Activated CD4-positive, alpha-beta T cell treated with anti-CD3 and anti-CD28 coated beads, Interleukin-2, amount 10 ng/mL, durations not matched to agents 24 days and 14 days (primary cell): ENCODE measurements at regions of chr10 and their contacts with region 1.

Region 1: GRCh38 chr10:8331883-8332729 is 277.6 kb downstream of the GATA3 start:
- DNase-seq: peak; percentile 95
- H3K4me3 Mint-ChIP-seq: peak overlapping the region; percentile 76
- H3K27ac Mint-ChIP-seq: peak overlapping the region; percentile 81
- H3K4me1 Mint-ChIP-seq: peaks cover 42% of the 10 kb centered on the region
- H3K27me3 Mint-ChIP-seq: no peaks in the 10 kb centered on the region

Region 2: DNA sequence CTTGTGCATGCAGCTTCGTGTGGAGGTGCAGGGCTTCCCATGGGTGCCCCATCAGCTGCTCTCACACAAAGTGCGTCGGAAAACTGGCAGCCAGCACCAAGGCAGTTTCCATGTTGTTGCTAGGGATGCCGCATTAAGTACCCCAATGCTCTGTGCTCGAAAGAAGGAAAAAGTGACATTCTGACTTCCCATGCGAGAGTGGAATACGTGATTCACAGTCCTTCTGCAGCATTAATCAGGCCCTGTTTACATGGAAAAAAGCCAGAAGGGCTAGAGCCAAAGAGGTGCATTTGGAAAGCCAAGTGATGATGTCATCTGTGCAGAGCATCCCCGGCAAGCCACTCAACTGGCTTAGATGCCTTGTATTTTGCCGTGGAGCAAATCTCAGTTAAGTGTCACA is 19.3 kb before region 1 on chr10:
- intact Hi-C with region 1: loop called (anchors 1 kb)
- DNase-seq: no peak
- H3K4me3 Mint-ChIP-seq: no peak overlapping the region
- H3K27ac Mint-ChIP-seq: peak overlapping the region; percentile 64
- H3K4me1 Mint-ChIP-seq: peaks cover 34% of the 10 kb centered on the region
- H3K27me3 Mint-ChIP-seq: no peaks in the 10 kb centered on the region

Region 3: DNA sequence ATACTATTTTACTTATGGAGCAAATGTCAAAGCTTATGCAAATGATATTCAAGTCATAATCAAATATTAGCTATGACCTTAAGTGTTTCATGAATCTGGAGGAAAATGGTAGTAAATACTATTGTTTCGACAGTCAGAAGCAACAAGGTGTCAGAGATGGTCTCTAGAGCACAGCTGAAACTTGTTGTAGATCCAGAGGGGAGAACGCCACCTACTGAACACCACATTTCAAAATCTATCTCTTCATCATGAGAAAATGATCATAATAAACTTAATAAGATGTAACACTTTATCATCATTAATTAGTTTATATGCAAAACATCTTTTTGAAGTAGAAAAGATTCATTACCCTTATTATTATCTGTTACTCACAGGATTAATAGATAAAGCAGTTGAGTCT is 141.1 kb after region 1 on chr10:
- intact Hi-C with region 1: no loop called
- DNase-seq: peak; percentile 75
- H3K4me3 Mint-ChIP-seq: no peak overlapping the region
- H3K27ac Mint-ChIP-seq: no peak overlapping the region
- H3K4me1 Mint-ChIP-seq: peaks cover 3% of the 10 kb centered on the region
- H3K27me3 Mint-ChIP-seq: peaks cover 30% of the 10 kb centered on the region

Region 4: DNA sequence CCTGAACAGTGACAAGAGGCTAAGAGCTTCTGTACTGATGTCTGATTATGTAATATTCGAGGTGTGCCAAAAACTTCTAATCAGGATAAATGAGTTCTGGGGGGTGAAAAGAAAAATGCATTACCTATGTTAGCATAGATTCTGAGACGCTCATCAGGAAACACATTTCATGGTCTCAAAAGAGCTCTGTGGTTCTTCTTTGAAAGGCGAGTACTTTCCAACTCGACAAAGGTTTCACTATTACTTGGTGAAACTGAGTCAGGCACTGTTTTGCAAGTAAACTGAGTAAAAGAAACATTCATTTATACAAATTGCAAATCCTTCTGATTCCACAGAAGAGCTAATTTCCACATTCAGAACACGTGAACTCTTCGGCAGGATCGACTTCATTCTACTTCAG is 245.6 kb after region 1 on chr10:
- intact Hi-C with region 1: loop called (anchors 10 kb)
- DNase-seq: no peak
- H3K4me3 Mint-ChIP-seq: no peak overlapping the region
- H3K27ac Mint-ChIP-seq: peak overlapping the region; percentile 58
- H3K4me1 Mint-ChIP-seq: peaks cover 16% of the 10 kb centered on the region
- H3K27me3 Mint-ChIP-seq: peaks cover 5% of the 10 kb centered on the region